Dorsolateral prefrontal cortex (tissue), 120 donors: ENCODE measurements at regions of chrX and their contacts with region 1.

Region 1: DNA sequence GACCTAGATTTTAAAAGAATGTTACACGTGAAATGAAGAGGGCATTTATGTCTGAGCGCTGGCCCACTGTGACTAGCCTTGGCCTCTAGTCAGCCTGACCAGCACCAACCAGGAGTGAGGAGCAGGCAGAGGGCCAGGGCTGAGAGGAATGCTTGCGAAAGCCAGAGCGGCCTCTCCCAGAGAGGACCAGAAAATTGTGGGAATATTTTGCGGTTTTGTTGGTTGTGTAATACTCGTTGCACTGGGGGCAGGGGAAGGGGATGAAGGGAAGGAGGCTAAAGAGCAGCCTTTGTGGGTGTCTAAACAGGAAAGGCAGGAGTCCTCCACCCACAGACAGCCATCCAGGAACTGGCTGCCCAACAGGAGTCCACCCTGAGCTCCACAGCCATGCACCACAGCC is 3.8 kb downstream of the GABRE start:
- DNase-seq: no peak
- H3K4me3 ChIP-seq: no peak overlapping the region
- H3K27ac ChIP-seq: no peak overlapping the region
- H3K27me3 ChIP-seq: peaks cover 0 to 89% (median 42%) of the 10 kb centered on the region in 45 donors
- CTCF ChIP-seq: no peak

Region 2: DNA sequence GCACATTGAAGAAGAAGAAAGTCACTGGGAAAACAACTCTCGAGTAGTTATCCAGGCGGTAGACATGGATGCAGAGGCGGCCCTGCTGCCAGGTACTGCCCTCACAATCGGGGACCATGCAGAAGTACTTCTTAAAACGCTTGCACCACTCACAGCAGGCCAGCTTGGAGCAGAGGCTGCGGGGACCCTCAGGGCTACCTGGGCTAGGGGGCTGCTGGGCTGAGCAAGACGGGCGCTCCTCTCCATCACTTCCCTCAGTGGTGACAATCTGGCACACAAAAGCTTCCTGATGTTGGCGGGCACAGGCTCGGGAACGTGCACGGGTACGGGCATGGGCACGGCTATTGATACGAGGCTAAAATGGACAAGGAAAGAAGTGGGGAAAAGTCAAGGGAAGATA is 15.9 kb before region 1 on chrX:
- intact Hi-C with region 1: loop called in 1 of 2 experiments (anchors 1 kb)
- DNase-seq: no peak
- H3K4me3 ChIP-seq: no peak overlapping the region
- H3K27ac ChIP-seq: no peak overlapping the region
- H3K27me3 ChIP-seq: peaks cover 0 to 86% (median 30%) of the 10 kb centered on the region in 45 donors
- CTCF ChIP-seq: no peak